Left colon (tissue), 2 donors: ENCODE measurements at regions of chr1 and their contacts with region 1.

Region 1: GRCh38 chr1:27392096-27392777 is at the start of gene GPR3:
- DNase-seq: peak; percentile 89 to 94
- ATAC-seq: peak; percentile 92
- total RNA-seq, gene GPR3: not detected

Region 2: DNA sequence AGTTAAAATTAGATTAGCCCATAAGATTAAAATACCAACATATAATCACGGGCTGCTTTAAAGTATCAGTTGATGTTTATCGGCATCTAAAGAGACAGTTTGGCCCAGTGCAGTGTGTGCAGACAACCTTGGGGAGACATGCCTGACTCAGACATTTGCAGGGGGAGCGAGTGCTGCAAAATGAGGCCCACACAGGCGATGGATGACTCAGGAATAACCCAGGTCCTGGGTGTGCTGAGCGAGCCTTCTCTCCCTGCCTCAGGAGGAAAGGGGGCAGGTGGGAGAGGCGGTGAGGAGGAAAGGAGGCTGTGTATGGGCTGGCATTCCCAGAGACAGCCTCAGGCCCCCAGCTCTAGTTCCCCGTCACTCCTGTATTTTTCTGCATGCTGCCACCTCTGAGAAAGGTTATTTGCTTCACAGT is 246.3 kb before region 1 on chr1:
- intact Hi-C with region 1: no loop called
- DNase-seq: no peak
- ATAC-seq: no peak

Region 3: GRCh38 chr1:27257155-27257554 is 135.1 kb before region 1 on chr1:
- intact Hi-C with region 1: no loop called
- DNase-seq: no peak
- ATAC-seq: no peak

Region 4: GRCh38 chr1:27300341-27301051 is 91.7 kb before region 1 on chr1:
- intact Hi-C with region 1: loop called (anchors 5 kb)
- DNase-seq: peak; percentile 66 to 78
- ATAC-seq: peak; percentile 89

Region 5: GRCh38 chr1:27332536-27333281 is 59.5 kb before region 1 on chr1:
- intact Hi-C with region 1: loop called in 1 of 2 experiments (anchors 10 kb)
- DNase-seq: peak in 1 of 2 donors; percentile 40
- ATAC-seq: peak; percentile 74